H1 (cell line): ENCODE measurements at regions of chr6 and their contacts with region 1.

Region 1: GRCh38 chr6:43059168-43060033 is at the starts of genes KLC4 and MRPL2:
- DNase-seq: peak; percentile 94 to 99
- H3K4me3 ChIP-seq: peak within 1 kb of the TSS; percentile 90 to 99 (median 98)
- H3K27ac ChIP-seq: peak within 1 kb of the TSS; percentile 89
- H3K4me1 ChIP-seq: peaks cover 4 to 10% (median 5%) of the 10 kb centered on the region in 4 experiments; a peak in 5 of 7 replicates
- H3K27me3 ChIP-seq: no peaks in the 10 kb centered on the region
- CTCF ChIP-seq: no peak
- EP300 ChIP-seq: 0 out of 3 replicates have a peak, but pooled peaks of 1 of the 2 experiments have one; percentile 10
- POLR2A ChIP-seq: peak in 1 of 2 experiments; percentile 98; a peak in 2 of 3 replicates
- RAD21 ChIP-seq: 0 out of 4 replicates have a peak, but pooled peaks of 1 of the 2 experiments have one; percentile 8
- total RNA-seq, gene KLC4: 27.7 and 28.5 TPM in 2 replicates
- total RNA-seq, gene MRPL2: 97.7 and 99.9 TPM in 2 replicates

Region 2: DNA sequence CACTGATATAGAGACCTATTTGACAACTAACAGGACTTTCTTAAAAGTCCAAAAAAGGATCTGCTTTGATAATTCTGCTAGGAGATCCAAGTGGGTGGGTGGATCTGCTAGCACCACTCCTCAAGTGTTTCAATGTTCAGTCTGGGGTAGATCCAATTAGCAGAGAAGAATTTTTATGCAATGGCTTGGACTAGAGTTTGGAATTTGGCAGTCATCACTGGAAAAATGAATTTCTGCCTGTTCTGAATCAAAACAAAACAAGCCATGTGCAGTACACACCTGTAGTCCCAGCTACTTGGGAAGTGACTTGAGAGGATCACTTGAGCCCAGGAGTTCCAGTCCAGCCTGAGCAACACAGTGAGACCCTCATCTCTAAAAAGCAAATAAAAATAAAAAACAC is 111.5 kb before region 1 on chr6:
- CTCF ChIA-PET with region 1: no interaction called
- POLR2A ChIA-PET with region 1: no interaction called
- DNase-seq: no peak
- H3K4me3 ChIP-seq: no peak overlapping the region
- H3K27ac ChIP-seq: no peak overlapping the region
- H3K4me1 ChIP-seq: no peaks in the 10 kb centered on the region
- H3K27me3 ChIP-seq: no peaks in the 10 kb centered on the region
- CTCF ChIP-seq: no peak
- EP300 ChIP-seq: no peak
- POLR2A ChIP-seq: no peak
- RAD21 ChIP-seq: no peak

Region 3: GRCh38 chr6:42996513-42996912 is 62.9 kb before region 1 on chr6:
- CTCF ChIA-PET with region 1: no interaction called
- POLR2A ChIA-PET with region 1: no interaction called
- DNase-seq: no peak
- H3K4me3 ChIP-seq: no peak overlapping the region
- H3K27ac ChIP-seq: no peak overlapping the region
- H3K4me1 ChIP-seq: no peaks in the 10 kb centered on the region; a peak in 1 of 7 replicates
- H3K27me3 ChIP-seq: no peaks in the 10 kb centered on the region
- CTCF ChIP-seq: no peak
- EP300 ChIP-seq: no peak
- POLR2A ChIP-seq: no peak
- RAD21 ChIP-seq: no peak

Region 4: GRCh38 chr6:43021270-43022047 is 37.9 kb before region 1 on chr6 and contains the start of gene RRP36:
- CTCF ChIA-PET with region 1: no interaction called
- POLR2A ChIA-PET with region 1: interaction called, 584 read pairs
- DNase-seq: peak in 1 of 2 experiments; percentile 84
- H3K4me3 ChIP-seq: peak within 1 kb of the TSS; percentile 93 to 99 (median 96)
- H3K27ac ChIP-seq: peak within 1 kb of the TSS; percentile 81
- H3K4me1 ChIP-seq: peaks cover 0 to 5% (median 1%) of the 10 kb centered on the region in 4 experiments; a peak in 3 of 7 replicates
- H3K27me3 ChIP-seq: no peaks in the 10 kb centered on the region
- CTCF ChIP-seq: no peak
- EP300 ChIP-seq: no peak
- POLR2A ChIP-seq: peak in 1 of 2 experiments; percentile 42; a peak in 1 of 3 replicates
- RAD21 ChIP-seq: 0 out of 4 replicates have a peak, but pooled peaks of 1 of the 2 experiments have one; percentile 1
- total RNA-seq, gene RRP36: 89.6 and 92.3 TPM in 2 replicates

Region 5: DNA sequence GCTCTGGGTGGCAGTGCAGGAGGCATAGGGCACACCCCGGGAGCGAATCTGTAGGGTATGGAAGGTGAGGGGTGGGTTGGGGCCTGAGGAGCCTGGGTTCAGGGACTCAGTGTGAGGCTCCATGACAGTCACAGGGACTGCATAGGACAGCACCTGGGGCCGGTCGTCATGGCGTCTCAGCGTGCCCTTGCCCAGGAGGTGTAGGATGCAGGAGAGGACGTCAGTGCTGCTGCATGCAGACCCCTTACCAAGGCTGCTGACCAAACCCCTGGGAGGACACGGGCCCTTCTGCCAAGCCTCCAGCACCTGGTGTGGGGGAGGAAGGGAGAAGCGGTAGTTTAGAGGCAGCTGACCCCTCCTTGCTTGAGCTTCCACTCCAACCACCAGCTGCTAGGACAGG is 21.7 kb before region 1 on chr6:
- CTCF ChIA-PET with region 1: interaction called, 3 read pairs
- POLR2A ChIA-PET with region 1: interaction called, 584 read pairs
- DNase-seq: no peak
- H3K4me3 ChIP-seq: no peak overlapping the region
- H3K27ac ChIP-seq: no peak overlapping the region
- H3K4me1 ChIP-seq: no peaks in the 10 kb centered on the region
- H3K27me3 ChIP-seq: no peaks in the 10 kb centered on the region
- CTCF ChIP-seq: no peak
- EP300 ChIP-seq: no peak
- POLR2A ChIP-seq: no peak
- RAD21 ChIP-seq: no peak

Region 6: DNA sequence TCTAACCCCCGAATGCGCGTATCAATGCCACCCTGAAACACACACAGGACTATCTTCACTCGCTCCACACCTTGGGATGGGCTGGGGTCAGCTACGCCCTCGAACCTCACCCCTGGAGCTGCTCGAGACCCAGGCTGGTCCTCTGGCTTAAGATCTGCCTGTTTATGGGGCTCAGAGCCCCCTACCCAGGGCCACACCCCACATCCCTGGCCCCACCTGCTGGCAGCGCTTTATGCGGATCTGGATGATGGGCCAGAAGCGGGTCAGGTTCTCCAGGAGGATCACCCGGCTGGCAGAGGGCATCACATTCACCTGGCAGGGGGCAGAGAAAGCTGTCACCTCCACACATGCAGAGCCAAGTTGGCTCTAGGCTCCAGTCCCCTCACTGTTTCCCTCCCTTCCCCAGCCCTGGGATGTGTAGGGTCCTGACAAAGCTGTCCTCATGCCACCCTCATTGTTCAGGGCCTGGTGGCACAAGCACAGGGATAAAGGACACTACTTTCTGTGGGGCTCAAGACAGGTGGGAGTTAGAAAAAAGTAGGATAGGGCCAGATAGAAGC is 13.9 kb before region 1 on chr6:
- CTCF ChIA-PET with region 1: interaction called, 3 read pairs
- POLR2A ChIA-PET with region 1: interaction called, 15 read pairs
- DNase-seq: no peak
- H3K4me3 ChIP-seq: no peak overlapping the region
- H3K27ac ChIP-seq: no peak overlapping the region
- H3K4me1 ChIP-seq: no peaks in the 10 kb centered on the region; a peak in 1 of 7 replicates
- H3K27me3 ChIP-seq: no peaks in the 10 kb centered on the region
- CTCF ChIP-seq: no peak
- EP300 ChIP-seq: no peak
- POLR2A ChIP-seq: no peak
- RAD21 ChIP-seq: no peak

Region 7: GRCh38 chr6:43174263-43175112 is 115.1 kb after region 1 on chr6:
- CTCF ChIA-PET with region 1: no interaction called
- POLR2A ChIA-PET with region 1: interaction called, 25 read pairs
- DNase-seq: peak; percentile 90 to 95
- H3K4me3 ChIP-seq: peak overlapping the region; percentile 27 to 86 (median 38)
- H3K27ac ChIP-seq: peak overlapping the region; percentile 77; the same call in 1 of the 2 replicates
- H3K4me1 ChIP-seq: peaks cover 9 to 17% (median 11%) of the 10 kb centered on the region in 4 experiments
- H3K27me3 ChIP-seq: peaks cover 0 to 6% (median 2%) of the 10 kb centered on the region in 4 experiments; a peak in 3 of 7 replicates
- CTCF ChIP-seq: no peak; a peak in 1 of 4 replicates
- EP300 ChIP-seq: no peak; a peak in 1 of 3 replicates
- POLR2A ChIP-seq: peak in 1 of 2 experiments; percentile 59; a peak in 2 of 3 replicates
- RAD21 ChIP-seq: peak in 1 of 2 experiments; percentile 11; a peak in 1 of 4 replicates

Region 8: GRCh38 chr6:43250992-43251373 is 191.6 kb after region 1 on chr6:
- CTCF ChIA-PET with region 1: no interaction called
- POLR2A ChIA-PET with region 1: no interaction called
- DNase-seq: no peak
- H3K4me3 ChIP-seq: no peak overlapping the region
- H3K27ac ChIP-seq: no peak overlapping the region
- H3K4me1 ChIP-seq: peaks cover 3 to 7% (median 4%) of the 10 kb centered on the region in 4 experiments
- H3K27me3 ChIP-seq: peaks cover 0 to 5% (median 2%) of the 10 kb centered on the region in 4 experiments; a peak in 3 of 7 replicates
- CTCF ChIP-seq: no peak
- EP300 ChIP-seq: no peak
- POLR2A ChIP-seq: no peak
- RAD21 ChIP-seq: no peak